Cardiac septum (tissue), 1 donor: ENCODE measurements at regions of chr17 and their contacts with region 1.

Region 1: DNA sequence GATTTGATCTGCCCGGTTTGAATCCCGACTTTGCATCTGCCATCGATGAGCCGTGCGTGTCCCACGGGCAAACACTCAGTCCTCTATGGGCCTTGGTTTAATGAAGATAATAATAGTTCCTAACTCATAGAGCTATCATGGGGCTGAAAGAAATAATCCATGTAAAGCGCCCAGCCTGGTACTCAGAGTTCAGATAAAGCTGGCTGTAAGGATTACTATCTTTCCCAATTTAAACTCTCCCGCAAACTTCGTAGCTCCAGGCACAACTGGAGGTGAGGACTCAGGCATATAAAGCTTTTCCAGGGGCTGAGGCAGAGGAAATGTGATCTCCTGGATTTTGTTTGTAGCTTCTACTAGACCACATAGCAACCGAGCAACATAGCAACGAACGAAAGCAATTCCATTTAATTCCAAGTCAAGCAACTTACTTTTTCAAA is 16.3 kb downstream of the ALOX15 start:
- DNase-seq: no peak

Region 2: GRCh38 chr17:4463818-4464476 is 161.3 kb before region 1 on chr17:
- intact Hi-C with region 1: no loop called
- DNase-seq: no peak

Region 3: GRCh38 chr17:4520894-4521600 is 104.2 kb before region 1 on chr17:
- intact Hi-C with region 1: no loop called
- DNase-seq: no peak

Region 4: DNA sequence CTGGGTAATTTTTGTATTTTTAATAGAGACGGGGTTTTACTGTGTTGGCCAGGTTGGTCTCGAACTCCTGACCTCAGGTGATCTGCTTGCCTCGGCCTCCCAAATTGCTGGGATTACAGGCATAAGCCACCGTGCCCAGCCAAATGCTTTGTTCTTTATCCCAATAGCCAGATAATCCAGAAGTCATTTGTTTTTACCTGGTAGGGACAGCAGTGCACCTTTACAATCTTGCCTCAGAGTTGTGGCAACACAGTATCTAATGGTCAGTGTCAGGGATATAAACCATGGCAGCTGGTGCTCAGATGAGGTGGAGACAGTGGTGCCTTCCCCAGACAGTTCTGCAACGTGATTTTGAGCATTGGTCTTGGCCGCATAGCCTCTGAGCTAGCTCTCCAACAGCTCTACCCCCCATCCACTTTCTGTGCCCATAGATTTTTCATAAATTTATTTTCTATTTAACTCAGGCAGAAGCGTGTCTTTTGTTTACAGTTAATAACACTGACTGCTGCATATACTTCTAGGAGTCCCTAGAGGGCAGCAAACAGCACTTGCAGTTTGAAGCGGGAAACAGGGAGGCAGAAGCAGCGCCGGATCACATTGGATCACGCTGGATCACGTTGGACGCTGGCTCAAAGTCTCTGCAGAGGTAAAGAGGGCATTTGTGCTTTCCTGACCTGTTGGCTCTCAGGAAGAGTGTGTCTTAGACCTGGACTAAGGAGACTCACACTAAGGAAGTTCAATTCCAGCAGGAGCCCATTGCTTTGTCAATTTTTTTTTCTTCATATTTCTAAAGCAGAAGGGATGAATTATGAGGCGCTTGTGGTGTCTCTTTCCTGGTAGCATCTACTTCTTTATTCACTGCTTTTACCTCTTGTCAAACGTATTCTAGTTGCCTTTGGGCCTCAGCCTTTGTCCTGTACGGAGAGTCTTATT is 59.7 kb before region 1 on chr17:
- intact Hi-C with region 1: loop called (anchors 1 kb)
- DNase-seq: peak; percentile 81